OCI-LY7 (cell line): ENCODE measurements at regions of chr16 and their contacts with region 1.

Region 1: DNA sequence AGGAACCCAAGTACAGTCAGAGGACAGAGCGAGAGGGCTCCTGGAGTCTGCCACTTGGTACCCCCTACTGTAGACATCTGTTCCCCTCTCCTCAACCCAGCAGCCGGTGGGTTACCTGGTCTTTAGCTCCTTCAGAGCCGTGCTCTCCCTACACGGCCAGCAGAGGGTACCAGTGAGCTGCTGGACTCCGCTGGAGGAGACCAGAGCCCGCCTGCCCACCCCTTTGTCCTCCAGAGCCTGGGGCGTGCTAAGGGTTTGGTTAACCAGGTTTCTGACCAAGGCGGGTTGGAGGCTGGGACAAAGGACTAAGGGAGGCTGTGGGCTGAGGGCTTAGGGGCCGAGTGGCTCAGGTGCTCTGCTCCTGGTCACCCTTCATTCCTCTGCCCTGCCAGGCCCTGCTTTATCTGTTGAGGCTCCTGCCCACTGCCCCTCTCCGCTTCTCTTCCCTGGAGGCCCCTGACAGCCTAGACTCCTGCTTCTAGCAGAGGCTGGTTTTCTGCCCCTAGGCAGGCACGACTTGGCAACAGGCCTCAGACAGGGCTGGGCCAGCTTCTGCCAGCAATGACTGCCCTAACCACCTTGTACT is 2.7 kb upstream of the HSD11B2 start:
- DNase-seq: peak; percentile 70
- H3K4me3 ChIP-seq: no peak overlapping the region
- H3K27ac ChIP-seq: no peak overlapping the region
- H3K4me1 ChIP-seq: no peaks in the 10 kb centered on the region
- CTCF ChIP-seq: peak; percentile 79

Region 2: DNA sequence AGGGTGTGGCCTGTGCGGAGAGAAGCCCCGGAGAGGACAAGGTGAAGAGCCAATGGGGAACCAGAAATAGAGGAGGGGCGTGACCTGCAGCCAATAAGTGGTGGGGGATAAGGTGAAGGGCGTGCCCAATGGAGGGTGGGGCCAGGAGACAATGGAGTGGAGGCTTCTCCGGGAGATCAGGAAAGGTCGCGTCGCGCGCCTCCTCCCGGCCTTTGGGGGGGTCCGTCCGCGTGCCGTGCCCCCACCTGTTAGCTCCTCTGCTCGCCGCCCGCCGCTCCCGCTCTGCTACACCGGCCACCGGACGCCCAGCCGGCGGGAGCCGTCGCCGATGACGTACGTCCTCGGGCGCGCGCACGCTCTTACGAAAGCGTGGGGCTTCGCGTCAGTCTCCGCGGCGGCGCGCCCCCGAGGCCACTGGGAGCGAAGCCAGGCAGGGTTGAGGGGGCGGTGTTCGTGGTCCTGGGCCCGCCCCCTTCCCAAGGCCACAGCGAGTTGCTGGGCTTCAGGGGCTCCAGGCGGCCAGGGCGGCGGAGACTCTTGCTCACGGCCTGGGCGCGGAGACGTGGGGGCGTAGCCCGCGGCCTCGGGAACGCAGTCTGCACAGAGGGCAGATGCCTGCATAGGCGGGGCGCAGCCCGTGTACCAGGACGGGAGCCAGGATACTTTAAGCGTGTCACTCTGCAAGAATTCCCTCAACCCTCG is 244.5 kb before region 1 on chr16 and contains the start of gene MATCAP1:
- CTCF ChIA-PET with region 1: interaction called, 14 read pairs
- POLR2A ChIA-PET with region 1: no interaction called
- intact Hi-C with region 1: no loop called
- DNase-seq: peak; percentile 97
- H3K4me3 ChIP-seq: peak within 1 kb of the TSS; percentile 79
- H3K27ac ChIP-seq: peak within 1 kb of the TSS; percentile 56
- H3K4me1 ChIP-seq: peaks cover 14% of the 10 kb centered on the region
- CTCF ChIP-seq: no peak
- total RNA-seq, gene MATCAP1: 18.0 and 22.9 TPM in 2 replicates

Region 3: GRCh38 chr16:67198238-67198734 is 230.0 kb before region 1 on chr16:
- CTCF ChIA-PET with region 1: no interaction called
- POLR2A ChIA-PET with region 1: interaction called, 11 read pairs
- intact Hi-C with region 1: no loop called
- DNase-seq: peak; percentile 35
- H3K4me3 ChIP-seq: no peak overlapping the region
- H3K27ac ChIP-seq: no peak overlapping the region
- H3K4me1 ChIP-seq: peaks cover 9% of the 10 kb centered on the region
- CTCF ChIP-seq: peak; percentile 82

Region 4: DNA sequence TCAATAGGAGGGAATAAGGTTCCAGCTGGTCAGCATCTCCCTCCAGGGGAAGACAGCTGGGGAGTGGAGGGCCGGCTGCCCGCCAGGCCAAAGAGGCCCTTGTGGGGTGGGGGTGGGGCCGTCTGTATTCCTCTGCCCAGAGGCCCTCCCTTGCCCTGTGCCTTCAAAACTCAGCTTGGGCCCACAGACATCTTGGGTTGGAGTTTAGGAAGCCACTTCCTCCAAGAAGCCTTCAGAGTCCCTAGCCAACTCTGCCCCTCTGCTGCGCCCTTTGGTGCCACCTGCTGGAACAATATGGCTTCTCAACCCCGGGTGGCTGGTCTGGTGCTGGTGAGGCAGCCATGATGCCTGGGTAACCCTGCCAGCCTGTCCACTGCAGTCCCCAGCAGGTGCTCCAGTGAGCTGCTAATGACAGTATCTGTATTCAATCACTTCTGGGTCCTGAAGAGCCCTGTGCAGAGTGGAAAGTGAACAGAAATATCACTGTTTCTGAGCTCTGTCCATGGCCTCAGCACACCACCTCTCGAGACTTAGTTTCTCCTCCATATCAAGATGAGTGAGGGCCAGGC is 19.4 kb after region 1 on chr16:
- CTCF ChIA-PET with region 1: no interaction called
- POLR2A ChIA-PET with region 1: no interaction called
- intact Hi-C with region 1: loop called (anchors 1 kb)
- DNase-seq: peak; percentile 68
- H3K4me3 ChIP-seq: no peak overlapping the region
- H3K27ac ChIP-seq: no peak overlapping the region
- H3K4me1 ChIP-seq: no peaks in the 10 kb centered on the region
- CTCF ChIP-seq: peak; percentile 81

Region 5: DNA sequence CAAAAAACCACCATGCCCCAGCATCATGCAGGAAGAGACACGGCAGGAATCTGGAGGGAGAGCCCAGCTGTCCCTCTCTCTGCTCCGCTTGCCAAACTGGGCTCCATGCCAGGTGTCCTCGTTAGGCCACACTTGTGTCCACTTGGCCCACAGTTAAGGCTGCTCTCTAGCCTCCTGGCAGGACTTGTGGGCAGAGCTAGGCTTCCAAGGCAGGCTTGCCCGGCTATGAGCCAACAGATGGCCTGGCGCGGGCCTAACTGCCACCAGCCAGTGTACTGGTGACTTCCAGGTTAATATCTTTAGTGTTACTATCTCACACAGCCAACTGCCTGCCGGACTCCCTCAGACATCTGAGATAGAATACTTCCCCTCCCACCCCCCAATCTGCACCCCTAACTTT is 42.1 kb after region 1 on chr16:
- CTCF ChIA-PET with region 1: interaction called, 5 read pairs
- POLR2A ChIA-PET with region 1: no interaction called
- intact Hi-C with region 1: loop called (anchors 1 kb)
- DNase-seq: no peak
- H3K4me3 ChIP-seq: no peak overlapping the region
- H3K27ac ChIP-seq: no peak overlapping the region
- H3K4me1 ChIP-seq: peaks cover 13% of the 10 kb centered on the region
- CTCF ChIP-seq: no peak

Region 6: GRCh38 chr16:67514382-67514828 is 86.2 kb after region 1 on chr16:
- CTCF ChIA-PET with region 1: no interaction called
- POLR2A ChIA-PET with region 1: no interaction called
- intact Hi-C with region 1: loop called (anchors 1 kb)
- DNase-seq: peak; percentile 95
- H3K4me3 ChIP-seq: peak overlapping the region; percentile 12
- H3K27ac ChIP-seq: peak overlapping the region; percentile 91
- H3K4me1 ChIP-seq: peaks cover 63% of the 10 kb centered on the region
- CTCF ChIP-seq: peak; percentile 82